ENCODE measurements at regions of chr16 and their contacts with region 1.

Region 1: GRCh38 chr16:3400779-3401688 is at the starts of genes ZNF174 and ZSCAN32:
- DNase-seq: peak; percentile 100
- H3K4me3 Mint-ChIP-seq: peak within 1 kb of the TSS; percentile 88
- H3K27ac Mint-ChIP-seq: peak within 1 kb of the TSS; percentile 83
- H3K4me1 Mint-ChIP-seq: peaks cover 52% of the 10 kb centered on the region
- H3K27me3 Mint-ChIP-seq: no peaks in the 10 kb centered on the region
- total RNA-seq, gene ZNF174: 6.0 to 7.3 TPM
- total RNA-seq, gene ZSCAN32: 10.9 to 11.9 TPM

Region 2: GRCh38 chr16:3305109-3306068 is 95.6 kb before region 1 on chr16 and contains the starts of genes TIGD7 and ZNF75A:
- CTCF ChIA-PET with region 1: interaction called, 3 read pairs
- POLR2A ChIA-PET with region 1: interaction called, 4 read pairs
- intact Hi-C with region 1: loop called (anchors 1 kb)
- DNase-seq: peak; percentile 88
- H3K4me3 Mint-ChIP-seq: peak within 1 kb of the TSS; percentile 71
- H3K27ac Mint-ChIP-seq: peak within 1 kb of the TSS; percentile 79
- H3K4me1 Mint-ChIP-seq: peaks cover 12% of the 10 kb centered on the region
- H3K27me3 Mint-ChIP-seq: no peaks in the 10 kb centered on the region
- total RNA-seq, gene TIGD7: 3.3 to 3.4 TPM
- total RNA-seq, gene ZNF75A: 19.3 to 20.0 TPM

Region 3: DNA sequence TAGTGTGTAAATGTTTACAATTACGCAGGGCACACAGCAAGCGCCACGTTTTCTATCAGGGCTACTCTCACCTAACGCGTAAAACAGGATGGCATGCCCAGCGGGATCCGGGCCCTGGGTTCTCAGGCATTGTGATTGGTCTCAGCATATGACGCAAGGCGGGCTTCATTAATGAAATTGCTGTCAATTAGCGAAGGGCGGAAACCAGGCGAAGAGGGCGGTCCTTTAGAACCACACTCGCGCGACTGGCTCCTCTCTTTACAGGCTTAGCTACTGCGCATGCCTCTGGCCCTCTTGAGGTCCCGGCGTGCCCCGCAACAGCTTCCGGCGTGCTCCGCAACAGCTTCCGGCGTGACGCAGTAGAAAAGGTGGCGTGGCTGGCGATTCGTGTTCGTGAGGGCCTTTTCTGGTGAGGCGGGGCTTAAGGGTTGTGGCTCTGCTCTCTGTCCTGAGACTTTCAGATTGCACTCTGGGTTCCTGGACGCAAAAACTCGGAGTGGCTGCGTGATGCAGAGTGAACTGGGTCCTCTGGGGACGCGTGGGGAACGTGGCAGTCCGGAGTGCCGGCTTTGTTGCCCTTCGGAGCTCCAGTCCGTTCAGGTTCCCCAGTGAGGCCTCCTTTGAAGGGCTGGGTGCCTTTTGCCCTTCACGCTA is 36.1 kb before region 1 on chr16:
- CTCF ChIA-PET with region 1: no interaction called
- POLR2A ChIA-PET with region 1: interaction called, 5 read pairs
- intact Hi-C with region 1: loop called (anchors 2 kb)
- DNase-seq: peak; percentile 91
- H3K4me3 Mint-ChIP-seq: peak overlapping the region; percentile 71
- H3K27ac Mint-ChIP-seq: peak overlapping the region; percentile 62
- H3K4me1 Mint-ChIP-seq: peaks cover 5% of the 10 kb centered on the region
- H3K27me3 Mint-ChIP-seq: peaks cover 5% of the 10 kb centered on the region

Region 4: DNA sequence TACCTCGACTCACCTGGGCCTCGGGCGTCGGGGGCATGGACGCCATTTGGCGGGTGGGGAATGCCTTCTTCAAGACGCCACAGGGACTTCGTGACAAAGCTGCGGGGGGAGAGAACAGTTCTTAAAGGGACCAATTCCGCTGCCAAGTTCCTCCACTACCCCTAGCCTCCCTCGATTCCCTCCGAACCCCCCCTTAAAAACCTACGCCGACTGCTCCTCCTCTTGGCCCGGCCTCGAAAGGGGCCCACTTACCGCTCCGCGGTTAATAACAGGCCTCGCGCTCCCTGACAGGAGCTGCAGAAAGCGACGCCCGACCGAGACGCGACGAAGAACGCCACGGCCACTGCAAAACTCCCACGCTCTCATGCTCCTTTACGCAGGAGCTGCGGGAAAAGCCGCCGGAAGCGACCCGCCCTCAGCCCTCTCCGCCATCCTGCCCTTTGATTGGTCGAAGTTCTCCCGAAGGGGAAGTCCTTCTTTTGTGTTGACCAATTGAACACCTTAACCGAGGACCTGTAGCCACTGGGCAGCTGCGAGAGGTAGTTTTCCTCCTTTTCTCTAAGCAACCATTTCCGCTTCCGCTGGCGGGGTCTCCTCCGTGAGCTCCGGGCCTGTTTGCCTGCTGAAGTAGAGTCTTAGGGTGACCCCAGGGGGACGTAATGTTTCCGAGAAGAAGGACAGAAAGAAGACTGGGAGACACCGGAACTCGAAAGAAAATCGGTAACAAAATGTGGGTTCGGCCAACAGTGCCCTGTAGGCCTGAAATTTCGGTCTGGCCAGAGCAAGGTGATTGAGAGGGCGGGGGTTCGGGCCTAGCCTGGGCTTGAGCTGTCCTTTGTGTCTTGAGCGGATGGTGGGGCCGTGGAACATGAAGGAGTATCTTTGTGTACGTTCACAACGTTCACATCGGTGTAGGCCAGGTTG is 42.3 kb after region 1 on chr16 and contains the starts of genes NAA60 and ZNF597:
- CTCF ChIA-PET with region 1: interaction called, 4 read pairs
- POLR2A ChIA-PET with region 1: interaction called, 7 read pairs
- intact Hi-C with region 1: loop called (anchors 1 kb)
- DNase-seq: peak; percentile 89
- H3K4me3 Mint-ChIP-seq: peak within 1 kb of the TSS; percentile 97
- H3K27ac Mint-ChIP-seq: peak within 1 kb of the TSS; percentile 95
- H3K4me1 Mint-ChIP-seq: peaks cover 15% of the 10 kb centered on the region
- H3K27me3 Mint-ChIP-seq: no peaks in the 10 kb centered on the region
- total RNA-seq, gene NAA60: 26.9 to 34.1 TPM
- total RNA-seq, gene ZNF597: 1.6 to 2.1 TPM

Region 5: GRCh38 chr16:3457434-3458252 is 56.6 kb after region 1 on chr16:
- CTCF ChIA-PET with region 1: interaction called, 6 read pairs
- POLR2A ChIA-PET with region 1: interaction called, 5 read pairs
- intact Hi-C with region 1: loop called (anchors 1 kb)
- DNase-seq: peak; percentile 92
- H3K4me3 Mint-ChIP-seq: peak overlapping the region; percentile 80
- H3K27ac Mint-ChIP-seq: peak overlapping the region; percentile 90
- H3K4me1 Mint-ChIP-seq: peaks cover 41% of the 10 kb centered on the region
- H3K27me3 Mint-ChIP-seq: no peaks in the 10 kb centered on the region

Measured in activated CD4-positive, alpha-beta memory T cell treated with anti-CD3 and anti-CD28 coated beads for 36 hours (primary cell).